Activated T-helper 2 cell treated with anti-CD3 and anti-CD28 coated beads, Interferon-gamma antibody, Interleukin-2, Interleukin-4, amounts not matched to agents 10 μg/mL and 5 μg/mL and 100 μg/mL, durations not matched to agents 14 hours and 24 hours and 36 hours (primary cell): ENCODE measurements at regions of chr1 and their contacts with region 1.

Region 1: DNA sequence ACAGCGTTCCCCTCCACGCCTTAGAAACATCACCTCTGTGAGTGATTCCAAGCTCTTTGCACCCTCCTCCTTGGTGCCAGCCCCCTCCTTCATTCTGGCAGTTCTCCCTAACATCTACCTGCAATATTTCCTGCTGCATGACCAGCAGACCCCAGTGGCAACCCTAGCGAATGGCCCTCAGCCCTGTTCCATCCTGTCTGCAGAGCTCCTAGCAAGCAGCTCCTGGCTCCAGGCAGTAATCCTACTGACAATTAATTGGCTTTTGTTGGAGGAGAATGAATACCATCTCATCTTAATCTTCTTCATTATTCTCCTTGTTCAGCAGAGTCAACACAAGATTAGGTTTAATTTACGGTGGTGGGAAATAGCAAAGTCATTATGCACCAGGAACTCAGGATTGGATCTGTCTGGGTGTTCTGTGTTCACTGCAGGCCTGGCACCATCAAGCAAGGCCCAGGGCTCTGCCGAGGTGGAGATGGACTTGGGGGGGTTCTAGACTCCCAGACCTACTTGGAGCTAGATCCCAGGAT is 12.4 kb downstream of the FBXO2 start:
- DNase-seq: no peak
- H3K4me3 Mint-ChIP-seq: no peak overlapping the region
- H3K27ac Mint-ChIP-seq: no peak overlapping the region
- H3K4me1 Mint-ChIP-seq: no peaks in the 10 kb centered on the region
- H3K27me3 Mint-ChIP-seq: no peaks in the 10 kb centered on the region

Region 2: GRCh38 chr1:11037740-11038182 is 604.1 kb before region 1 on chr1:
- intact Hi-C with region 1: loop called (anchors 1 kb)
- DNase-seq: peak; percentile 78
- H3K4me3 Mint-ChIP-seq: no peak overlapping the region
- H3K27ac Mint-ChIP-seq: no peak overlapping the region
- H3K4me1 Mint-ChIP-seq: peaks cover 2% of the 10 kb centered on the region
- H3K27me3 Mint-ChIP-seq: no peaks in the 10 kb centered on the region

Region 3: GRCh38 chr1:11245904-11246719 is 395.7 kb before region 1 on chr1:
- intact Hi-C with region 1: loop called (anchors 1 kb)
- DNase-seq: no peak
- H3K4me3 Mint-ChIP-seq: no peak overlapping the region
- H3K27ac Mint-ChIP-seq: no peak overlapping the region
- H3K4me1 Mint-ChIP-seq: peaks cover 3% of the 10 kb centered on the region
- H3K27me3 Mint-ChIP-seq: no peaks in the 10 kb centered on the region

Region 4: GRCh38 chr1:11337580-11338073 is 304.2 kb before region 1 on chr1:
- intact Hi-C with region 1: loop called (anchors 1 kb)
- DNase-seq: peak; percentile 49
- H3K4me3 Mint-ChIP-seq: no peak overlapping the region
- H3K27ac Mint-ChIP-seq: no peak overlapping the region
- H3K4me1 Mint-ChIP-seq: peaks cover 4% of the 10 kb centered on the region
- H3K27me3 Mint-ChIP-seq: peaks cover 31% of the 10 kb centered on the region

Region 5: GRCh38 chr1:11594222-11594621 is 47.6 kb before region 1 on chr1:
- intact Hi-C with region 1: no loop called
- DNase-seq: no peak
- H3K4me3 Mint-ChIP-seq: no peak overlapping the region
- H3K27ac Mint-ChIP-seq: no peak overlapping the region
- H3K4me1 Mint-ChIP-seq: no peaks in the 10 kb centered on the region
- H3K27me3 Mint-ChIP-seq: peaks cover 1% of the 10 kb centered on the region